ENCODE measurements at regions of chr14 and their contacts with region 1.

Region 1: GRCh38 chr14:24114536-24115450 is at the starts of genes DCAF11 and NRL:
- DNase-seq: peak; percentile 99
- ATAC-seq: peak; percentile 89
- H3K4me3 Mint-ChIP-seq: peak within 1 kb of the TSS; percentile 85
- H3K27ac Mint-ChIP-seq: peak within 1 kb of the TSS; percentile 97
- H3K4me1 Mint-ChIP-seq: peaks cover 28% of the 10 kb centered on the region
- H3K27me3 Mint-ChIP-seq: no peaks in the 10 kb centered on the region
- total RNA-seq, gene DCAF11: 74.0 to 86.2 TPM
- total RNA-seq, gene NRL: 1.5 to 1.6 TPM

Region 2: GRCh38 chr14:23469127-23469905 is 645.5 kb before region 1 on chr14 and contains the start of gene NGDN:
- CTCF ChIA-PET with region 1: no interaction called
- POLR2A ChIA-PET with region 1: no interaction called
- intact Hi-C with region 1: loop called in 1 of 2 experiments (anchors 1 kb)
- DNase-seq: peak; percentile 95
- ATAC-seq: peak; percentile 97
- H3K4me3 Mint-ChIP-seq: no peak within 1 kb of the TSS
- H3K27ac Mint-ChIP-seq: no peak within 1 kb of the TSS
- H3K4me1 Mint-ChIP-seq: peaks cover 11% of the 10 kb centered on the region
- H3K27me3 Mint-ChIP-seq: no peaks in the 10 kb centered on the region
- total RNA-seq, gene NGDN: 53.0 to 57.8 TPM

Region 3: DNA sequence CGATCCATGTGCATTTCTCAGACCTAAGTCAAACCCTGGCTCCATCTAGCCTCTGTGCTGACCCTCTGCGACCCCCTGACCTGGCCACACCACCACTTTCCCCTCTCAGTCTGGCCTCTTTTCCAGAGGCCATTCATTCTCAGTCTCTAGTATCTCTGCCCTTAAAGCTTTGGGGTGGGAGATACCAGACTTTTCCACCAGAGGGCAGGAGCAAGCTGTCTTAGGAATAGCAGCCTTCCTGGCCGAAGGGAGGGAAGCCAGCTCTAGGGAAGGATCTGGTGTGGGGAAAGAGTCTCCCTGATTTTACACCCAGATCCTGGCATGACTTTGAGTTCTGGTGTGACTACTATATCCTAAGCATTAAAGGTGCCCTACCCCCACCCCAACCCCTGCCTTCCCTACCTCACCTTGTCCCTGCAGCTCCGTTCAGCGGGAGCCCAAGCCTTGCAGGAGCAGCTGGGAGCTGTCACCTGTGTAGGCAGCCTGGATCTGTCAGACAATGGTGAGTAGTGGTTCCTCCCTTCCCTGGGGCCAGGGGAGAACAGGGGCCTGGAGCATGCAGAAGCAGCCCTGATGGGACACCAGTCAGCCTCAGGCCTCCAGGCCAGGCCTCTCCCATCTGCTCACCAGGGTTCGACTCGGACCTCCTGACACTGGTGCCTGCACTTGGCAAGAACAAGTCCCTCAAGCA is 56.4 kb before region 1 on chr14:
- CTCF ChIA-PET with region 1: interaction called, 71 read pairs
- POLR2A ChIA-PET with region 1: no interaction called
- intact Hi-C with region 1: loop called in 1 of 2 experiments (anchors 2 kb)
- DNase-seq: peak; percentile 73
- ATAC-seq: peak; percentile 63
- H3K4me3 Mint-ChIP-seq: no peak overlapping the region
- H3K27ac Mint-ChIP-seq: peak overlapping the region; percentile 40
- H3K4me1 Mint-ChIP-seq: peaks cover 4% of the 10 kb centered on the region
- H3K27me3 Mint-ChIP-seq: peaks cover 2% of the 10 kb centered on the region

Region 4: DNA sequence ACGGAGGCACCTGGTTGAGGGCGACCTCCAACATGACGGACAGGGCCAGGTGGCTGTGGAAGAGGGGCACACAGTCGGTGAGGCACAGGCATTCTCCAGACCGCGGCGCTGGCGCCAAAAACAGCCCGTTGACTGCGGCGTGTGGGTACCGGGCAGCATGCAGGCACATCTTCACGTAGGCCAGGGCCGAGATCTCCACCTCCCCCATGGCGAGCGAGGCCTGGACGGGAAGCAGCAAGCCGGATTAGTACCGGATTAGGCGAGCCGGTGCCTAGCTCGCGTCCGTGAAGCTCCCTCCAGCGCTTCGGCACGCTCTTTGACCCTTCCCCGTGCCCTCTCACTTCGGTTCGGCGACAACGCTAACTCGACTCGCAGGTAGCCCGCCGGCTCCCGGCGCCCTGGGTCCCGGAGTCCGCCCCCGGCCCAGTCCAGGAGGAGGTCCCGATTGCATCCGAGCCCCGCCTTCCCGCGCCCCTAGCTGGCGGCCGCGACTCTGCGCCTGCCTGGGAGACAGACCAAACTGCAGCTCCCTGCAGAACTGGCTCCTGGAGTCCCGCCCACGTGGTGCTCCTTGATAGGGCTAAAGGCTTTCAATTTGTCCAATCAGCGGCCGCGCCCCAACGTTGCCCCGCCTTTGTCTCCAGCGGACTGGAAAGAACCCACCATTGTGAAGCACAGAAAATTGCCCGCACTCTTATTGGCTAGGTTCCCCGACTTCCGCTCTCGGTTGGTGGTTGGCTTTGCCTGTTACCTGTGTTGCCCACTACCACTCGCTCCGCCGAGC is 26.5 kb after region 1 on chr14 and contains the start of gene EMC9:
- CTCF ChIA-PET with region 1: interaction called, 21 read pairs
- POLR2A ChIA-PET with region 1: interaction called, 35 read pairs
- intact Hi-C with region 1: loop called (anchors 1 kb)
- DNase-seq: peak; percentile 100
- ATAC-seq: peak; percentile 87
- H3K4me3 Mint-ChIP-seq: peak within 1 kb of the TSS; percentile 88
- H3K27ac Mint-ChIP-seq: peak within 1 kb of the TSS; percentile 97
- H3K4me1 Mint-ChIP-seq: peaks cover 66% of the 10 kb centered on the region
- H3K27me3 Mint-ChIP-seq: no peaks in the 10 kb centered on the region
- total RNA-seq, gene EMC9: 36.9 to 46.7 TPM

Region 5: GRCh38 chr14:24188251-24189058 is 73.7 kb after region 1 on chr14 and contains the start of gene IPO4:
- CTCF ChIA-PET with region 1: no interaction called
- POLR2A ChIA-PET with region 1: interaction called, 6 read pairs
- intact Hi-C with region 1: loop called (anchors 1 kb)
- DNase-seq: peak; percentile 97
- ATAC-seq: peak; percentile 92
- H3K4me3 Mint-ChIP-seq: peak within 1 kb of the TSS; percentile 89
- H3K27ac Mint-ChIP-seq: peak within 1 kb of the TSS; percentile 83
- H3K4me1 Mint-ChIP-seq: peaks cover 40% of the 10 kb centered on the region
- H3K27me3 Mint-ChIP-seq: no peaks in the 10 kb centered on the region
- total RNA-seq, gene IPO4: 73.4 to 73.7 TPM

Region 6: DNA sequence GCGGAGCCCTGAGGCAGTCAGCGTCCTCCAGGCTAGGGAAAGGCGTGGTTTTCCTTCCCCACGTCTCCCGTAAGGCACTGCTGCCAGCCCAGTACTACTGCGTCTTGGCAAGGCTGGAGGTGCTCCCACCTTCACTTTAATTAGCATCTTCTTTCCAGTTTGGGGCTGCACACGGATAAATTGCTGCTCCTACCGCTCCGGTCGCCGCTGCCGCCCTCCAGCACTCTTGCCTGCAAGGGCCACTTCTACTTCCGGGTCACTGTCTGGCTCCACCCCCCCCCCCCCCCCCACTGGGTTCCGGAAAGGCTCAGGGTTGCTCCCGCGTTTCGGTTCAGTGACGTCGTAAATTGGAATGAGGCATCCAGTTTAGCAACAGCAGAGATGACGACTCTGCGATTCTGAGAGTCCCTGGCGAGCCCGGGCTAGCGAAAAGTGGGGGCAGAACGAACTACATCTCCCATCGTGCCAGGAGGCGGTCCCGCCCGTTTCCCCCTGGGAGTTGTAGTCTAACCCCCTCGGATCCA is 117.4 kb after region 1 on chr14 and contains the start of gene NEDD8:
- CTCF ChIA-PET with region 1: no interaction called
- POLR2A ChIA-PET with region 1: no interaction called
- intact Hi-C with region 1: loop called (anchors 1 kb)
- DNase-seq: peak; percentile 96
- ATAC-seq: peak; percentile 91
- H3K4me3 Mint-ChIP-seq: peak within 1 kb of the TSS; percentile 78
- H3K27ac Mint-ChIP-seq: peak within 1 kb of the TSS; percentile 89
- H3K4me1 Mint-ChIP-seq: peaks cover 58% of the 10 kb centered on the region
- H3K27me3 Mint-ChIP-seq: no peaks in the 10 kb centered on the region
- total RNA-seq, gene NEDD8: 187 to 217 TPM

Region 7: DNA sequence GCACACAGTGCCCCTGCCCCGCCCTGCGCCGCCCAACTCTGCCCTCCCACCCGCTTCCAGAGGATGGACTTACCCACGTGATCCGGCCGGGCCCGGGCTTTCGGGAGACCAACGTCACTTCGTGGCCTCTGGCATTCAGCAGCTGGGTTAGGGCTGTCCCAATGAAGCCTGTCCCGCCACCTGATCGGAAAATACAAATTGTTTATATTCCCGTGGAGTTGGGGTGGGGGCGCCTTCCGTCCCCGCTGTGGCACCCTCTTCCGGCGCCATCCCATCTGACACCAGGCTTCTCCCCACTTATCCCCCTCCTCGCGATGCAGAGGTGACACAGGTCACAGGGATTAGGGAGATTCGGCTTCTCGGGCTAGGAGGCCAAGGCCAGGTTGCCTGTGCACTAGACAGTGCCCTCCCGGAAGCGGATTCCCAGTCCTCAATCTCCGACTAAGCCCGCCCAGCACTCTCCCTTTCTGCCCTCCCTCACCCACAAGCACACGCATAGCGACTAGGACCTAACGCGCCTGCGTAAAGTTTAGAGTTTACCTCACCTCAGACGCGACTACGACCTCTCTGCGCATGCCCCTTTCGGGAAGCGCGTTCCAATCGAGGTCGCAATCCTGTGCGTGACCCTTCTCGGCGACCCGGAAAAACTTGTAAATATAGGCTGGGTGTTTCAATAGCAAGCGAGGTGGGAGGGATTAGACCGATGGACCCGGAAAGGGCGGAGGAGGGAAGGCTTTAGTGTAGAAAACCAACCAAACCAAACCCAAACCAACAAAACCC is 327.7 kb after region 1 on chr14 and contains the start of gene SDR39U1:
- CTCF ChIA-PET with region 1: no interaction called
- POLR2A ChIA-PET with region 1: no interaction called
- intact Hi-C with region 1: loop called (anchors 1 kb)
- DNase-seq: peak; percentile 98
- ATAC-seq: peak; percentile 92
- H3K4me3 Mint-ChIP-seq: peak within 1 kb of the TSS; percentile 97
- H3K27ac Mint-ChIP-seq: peak within 1 kb of the TSS; percentile 99
- H3K4me1 Mint-ChIP-seq: peaks cover 41% of the 10 kb centered on the region
- H3K27me3 Mint-ChIP-seq: no peaks in the 10 kb centered on the region
- total RNA-seq, gene SDR39U1: 40.9 to 47.8 TPM

Measured in activated CD4-positive, alpha-beta T cell treated with anti-CD3 and anti-CD28 coated beads for 36 hours (primary cell).